Dendritic cell treated with granulocyte-macrophage colony-stimulating factor and Interleukin-4, amounts not matched to agents 40 ng/mL and 50 ng/mL, for 4 days (primary cell): ENCODE measurements at regions of chr19 and their contacts with region 1.

Region 1: GRCh38 chr19:3708208-3708931 is at the start of gene TJP3:
- H3K4me3 Mint-ChIP-seq: no peak within 1 kb of the TSS
- H3K27ac Mint-ChIP-seq: peak within 1 kb of the TSS; percentile 64
- H3K4me1 Mint-ChIP-seq: peaks cover 45% of the 10 kb centered on the region
- H3K27me3 Mint-ChIP-seq: peaks cover 39% of the 10 kb centered on the region

Region 2: GRCh38 chr19:3665681-3666544 is 42.5 kb before region 1 on chr19:
- intact Hi-C with region 1: loop called (anchors 5 kb)
- H3K4me3 Mint-ChIP-seq: no peak overlapping the region
- H3K27ac Mint-ChIP-seq: no peak overlapping the region
- H3K4me1 Mint-ChIP-seq: peaks cover 47% of the 10 kb centered on the region
- H3K27me3 Mint-ChIP-seq: no peaks in the 10 kb centered on the region

Region 3: GRCh38 chr19:3748965-3749364 is 40.6 kb after region 1 on chr19:
- intact Hi-C with region 1: no loop called
- H3K4me3 Mint-ChIP-seq: no peak overlapping the region
- H3K27ac Mint-ChIP-seq: no peak overlapping the region
- H3K4me1 Mint-ChIP-seq: no peaks in the 10 kb centered on the region
- H3K27me3 Mint-ChIP-seq: no peaks in the 10 kb centered on the region